Right ventricle myocardium superior (tissue), 1 donor: ENCODE measurements at regions of chr3 and their contacts with region 1.

Region 1: GRCh38 chr3:192188218-192188835 is 539.0 kb downstream of the FGF12 start:
- DNase-seq: peak; percentile 68
- ATAC-seq: peak; percentile 64

Region 2: DNA sequence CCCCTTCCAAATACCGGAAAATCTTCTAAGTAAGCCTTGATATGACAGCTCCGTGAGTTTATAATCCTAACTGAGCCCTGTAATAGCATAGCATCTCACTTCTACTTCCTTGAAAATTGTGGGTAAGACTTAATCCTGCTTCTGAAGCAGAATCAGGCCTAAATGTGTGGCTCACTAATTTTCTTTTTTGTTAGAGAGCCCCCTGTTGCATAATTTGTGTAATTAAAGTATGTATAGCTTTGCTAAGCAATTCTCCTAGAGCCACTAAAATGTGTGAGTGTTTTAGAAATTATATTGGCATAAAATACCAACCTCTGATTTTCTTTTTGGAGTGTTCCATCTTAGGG is 234.6 kb after region 1 on chr3:
- intact Hi-C with region 1: loop called (anchors 10 kb)
- DNase-seq: no peak
- ATAC-seq: no peak